GM10248 (cell line): ENCODE measurements at regions of chr7 and their contacts with region 1.

Region 1: GRCh38 chr7:37705976-37706375 is 22.4 kb downstream of the GPR141 start:
- DNase-seq: no peak
- CTCF ChIP-seq: no peak

Region 2: DNA sequence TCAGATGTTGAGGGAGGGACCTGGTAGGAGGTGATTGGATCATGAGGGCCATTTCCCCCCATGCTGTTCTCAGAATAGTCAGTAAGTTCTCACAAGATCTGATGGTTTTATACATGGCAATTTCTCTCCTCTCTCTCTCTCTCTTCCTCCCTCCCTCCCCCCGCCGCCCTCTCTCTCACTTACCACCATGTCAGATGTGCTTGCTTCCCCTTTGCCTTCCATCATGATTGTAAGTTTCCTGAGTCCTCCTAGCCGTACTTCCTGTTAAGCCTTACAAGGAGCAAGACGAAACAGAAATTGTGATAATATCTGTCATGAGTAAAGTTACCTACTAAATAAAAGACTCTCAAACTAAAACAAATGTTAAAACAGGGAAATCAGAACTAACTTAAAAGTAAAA is 42.3 kb before region 1 on chr7:
- CTCF ChIA-PET with region 1: no interaction called
- POLR2A ChIA-PET with region 1: no interaction called
- DNase-seq: no peak
- CTCF ChIP-seq: no peak

Region 3: GRCh38 chr7:37694175-37694779 is 11.7 kb before region 1 on chr7:
- CTCF ChIA-PET with region 1: interaction called, 11 read pairs
- POLR2A ChIA-PET with region 1: no interaction called
- DNase-seq: no peak
- CTCF ChIP-seq: no peak

Region 4: DNA sequence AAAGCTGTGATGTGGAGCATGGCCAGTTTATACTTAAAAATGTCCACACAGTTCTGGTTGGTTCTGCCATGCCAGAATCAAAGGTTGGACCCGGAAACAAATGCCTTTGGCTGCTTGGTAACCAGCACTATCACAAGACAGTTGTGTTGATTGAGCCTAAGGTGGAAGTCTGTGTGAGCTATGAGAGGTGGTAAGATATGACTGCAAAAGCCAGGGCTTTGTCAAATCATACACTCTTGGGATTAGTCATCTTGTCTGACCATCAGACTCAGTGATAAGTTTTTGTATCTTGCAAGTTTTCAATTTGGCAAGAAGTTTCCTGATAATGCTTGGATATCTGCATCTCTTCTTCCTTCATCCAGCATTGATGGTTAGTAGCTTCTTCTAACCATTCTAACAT is 13.1 kb after region 1 on chr7:
- CTCF ChIA-PET with region 1: interaction called, 14 read pairs
- POLR2A ChIA-PET with region 1: interaction called, 3 read pairs
- DNase-seq: peak; percentile 40
- CTCF ChIP-seq: no peak